ENCODE measurements at regions of chrX and their contacts with region 1.

Region 1: DNA sequence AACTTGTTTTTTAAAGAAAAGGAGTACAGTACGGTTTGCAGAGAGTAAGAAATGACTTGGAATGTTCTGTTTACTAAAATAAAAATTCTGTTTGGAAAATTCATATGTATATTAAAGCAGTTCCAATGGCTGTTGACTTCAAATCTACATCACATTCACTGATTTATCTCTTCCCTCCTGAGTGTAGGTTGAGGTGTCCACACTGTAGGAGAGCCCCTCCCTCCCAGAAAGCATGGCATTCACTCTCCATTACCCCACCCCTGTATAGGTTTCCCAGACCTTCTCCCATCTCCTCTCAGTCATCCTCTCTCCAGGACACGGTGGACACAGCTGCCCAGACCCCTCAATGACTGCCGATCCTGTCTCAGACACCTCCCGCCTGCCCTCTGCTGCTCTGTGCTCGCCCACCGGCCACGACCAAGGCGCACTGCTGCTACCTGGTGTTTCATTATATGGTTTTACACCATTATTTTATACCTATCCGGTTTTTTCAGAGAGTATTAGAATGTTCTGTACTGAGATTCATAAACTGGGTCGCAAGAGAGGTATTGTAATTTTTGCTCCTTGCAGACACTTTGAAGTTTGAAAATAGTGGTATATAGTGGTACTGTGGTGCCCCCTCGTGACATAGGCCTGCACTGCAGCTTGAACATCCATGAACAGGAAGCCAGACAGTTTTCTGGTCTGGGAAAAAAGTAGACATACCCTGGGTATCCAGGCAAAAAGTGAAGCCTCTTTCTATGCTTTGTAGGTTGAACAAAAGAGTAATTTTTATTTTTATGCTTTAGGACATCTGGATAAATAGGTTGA is 38.8 kb upstream of the BEX4 start:
- DNase-seq: peak; percentile 48
- H3K4me3 ChIP-seq: peak overlapping the region; percentile 67
- H3K27ac ChIP-seq: no peak overlapping the region
- H3K4me1 ChIP-seq: no peaks in the 10 kb centered on the region
- H3K27me3 ChIP-seq: no peaks in the 10 kb centered on the region

Region 2: DNA sequence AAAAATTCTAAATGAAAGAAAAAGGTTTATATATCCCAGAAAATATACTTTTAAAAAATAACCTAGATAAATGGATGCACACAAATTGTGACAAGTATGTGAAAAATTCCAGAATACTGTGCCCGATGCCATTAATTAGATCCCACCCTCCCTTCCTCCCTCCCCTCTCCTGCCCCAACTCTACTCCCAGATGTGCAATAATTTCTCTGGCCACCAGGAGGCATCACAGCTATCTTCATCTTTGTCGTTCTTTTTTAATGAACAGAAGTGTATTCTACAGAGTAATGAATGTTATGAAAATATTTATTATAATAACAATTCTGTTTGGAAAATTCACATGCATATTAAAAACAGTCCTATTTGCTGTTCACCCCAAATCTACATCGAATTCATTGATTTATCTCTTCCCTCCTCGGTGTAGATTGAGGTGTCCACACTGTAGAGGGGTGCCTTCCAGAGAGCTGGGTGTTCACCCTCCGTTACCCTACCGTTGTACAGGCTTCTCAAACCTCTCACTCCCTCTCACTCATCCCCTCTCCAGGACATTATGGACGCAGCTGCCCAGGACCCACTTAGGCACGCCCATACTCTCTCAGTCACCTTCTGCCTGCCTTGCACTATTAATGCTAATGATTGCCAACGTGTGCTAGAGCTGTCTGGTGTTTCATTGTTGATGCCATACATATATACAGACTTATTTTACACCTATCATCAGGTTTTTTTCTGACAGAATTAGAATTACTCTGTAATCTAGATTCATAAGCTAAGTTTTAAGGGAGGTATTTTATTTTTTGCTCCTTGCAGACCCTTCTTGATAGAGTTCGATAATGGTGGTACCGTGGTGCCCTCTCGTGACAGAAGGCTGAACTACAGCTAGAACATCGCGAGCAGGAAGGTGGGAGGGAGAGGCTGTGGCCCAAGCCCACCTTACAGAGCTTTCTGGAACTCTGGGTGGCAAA is 225.0 kb before region 1 on chrX:
- in situ Hi-C with region 1: loop called (anchors 10 kb)
- DNase-seq: peak; percentile 38
- H3K4me3 ChIP-seq: peak overlapping the region; percentile 69
- H3K27ac ChIP-seq: no peak overlapping the region
- H3K4me1 ChIP-seq: peaks cover 8% of the 10 kb centered on the region; the same call in 1 of the 2 replicates
- H3K27me3 ChIP-seq: no peaks in the 10 kb centered on the region